ENCODE measurements at regions of chr6 and their contacts with region 1.

Region 1: GRCh38 chr6:3124667-3125066 is 6.2 kb downstream of the BPHL start:
- DNase-seq: no peak
- ATAC-seq: no peak

Region 2: GRCh38 chr6:2634139-2634964 is 490.3 kb before region 1 on chr6:
- intact Hi-C with region 1: no loop called
- DNase-seq: peak; percentile 92
- ATAC-seq: peak; percentile 93

Region 3: GRCh38 chr6:3251462-3252314 is 127.0 kb after region 1 on chr6:
- intact Hi-C with region 1: loop called (anchors 5 kb)
- DNase-seq: peak; percentile 85
- ATAC-seq: peak; percentile 84

Region 4: DNA sequence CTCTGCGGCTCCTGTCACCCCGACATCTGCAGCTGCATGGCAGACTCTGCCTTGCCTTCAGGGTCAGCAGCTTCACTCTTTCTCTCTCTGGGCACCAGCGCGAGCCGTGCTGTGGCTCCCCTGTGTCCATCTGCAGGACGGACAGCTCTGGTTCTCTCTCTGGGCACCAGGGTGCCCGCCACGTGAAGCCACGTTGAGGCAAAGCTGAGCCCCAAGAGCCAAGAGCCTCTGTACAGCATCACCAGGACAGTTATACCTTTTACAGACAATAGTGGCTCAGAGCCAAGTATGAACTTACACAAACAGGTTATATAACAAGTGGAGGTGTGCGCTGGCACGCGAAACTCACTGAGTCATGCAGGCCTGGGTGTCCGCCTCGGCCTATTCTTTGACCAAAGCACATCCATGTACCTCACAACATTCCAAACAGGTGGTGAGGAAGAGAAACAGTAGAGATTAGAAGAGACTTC is 775.3 kb after region 1 on chr6:
- intact Hi-C with region 1: no loop called
- DNase-seq: no peak
- ATAC-seq: no peak

Measured in left ventricle myocardium superior (tissue), 1 donor.